CD4-positive, alpha-beta T cell (primary cell): ENCODE measurements at regions of chr19 and their contacts with region 1.

Region 1: GRCh38 chr19:17470068-17470841 is at the start of gene SLC27A1:
- DNase-seq: peak; percentile 73 to 95 (median 84)
- ATAC-seq: peak; percentile 62
- H3K4me3 ChIP-seq: peak within 1 kb of the TSS; percentile 88
- H3K4me3 Mint-ChIP-seq: peak within 1 kb of the TSS; percentile 87
- H3K27ac ChIP-seq: peak within 1 kb of the TSS; percentile 57 to 75
- H3K27ac Mint-ChIP-seq: peak within 1 kb of the TSS; percentile 34
- H3K4me1 ChIP-seq: peaks cover 36% of the 10 kb centered on the region
- H3K4me1 Mint-ChIP-seq: peaks cover 24% of the 10 kb centered on the region
- H3K27me3 ChIP-seq: no peaks in the 10 kb centered on the region
- H3K27me3 Mint-ChIP-seq: peaks cover 3% of the 10 kb centered on the region
- CTCF ChIP-seq: no peak
- total RNA-seq, gene SLC27A1: 3.0 TPM

Region 2: DNA sequence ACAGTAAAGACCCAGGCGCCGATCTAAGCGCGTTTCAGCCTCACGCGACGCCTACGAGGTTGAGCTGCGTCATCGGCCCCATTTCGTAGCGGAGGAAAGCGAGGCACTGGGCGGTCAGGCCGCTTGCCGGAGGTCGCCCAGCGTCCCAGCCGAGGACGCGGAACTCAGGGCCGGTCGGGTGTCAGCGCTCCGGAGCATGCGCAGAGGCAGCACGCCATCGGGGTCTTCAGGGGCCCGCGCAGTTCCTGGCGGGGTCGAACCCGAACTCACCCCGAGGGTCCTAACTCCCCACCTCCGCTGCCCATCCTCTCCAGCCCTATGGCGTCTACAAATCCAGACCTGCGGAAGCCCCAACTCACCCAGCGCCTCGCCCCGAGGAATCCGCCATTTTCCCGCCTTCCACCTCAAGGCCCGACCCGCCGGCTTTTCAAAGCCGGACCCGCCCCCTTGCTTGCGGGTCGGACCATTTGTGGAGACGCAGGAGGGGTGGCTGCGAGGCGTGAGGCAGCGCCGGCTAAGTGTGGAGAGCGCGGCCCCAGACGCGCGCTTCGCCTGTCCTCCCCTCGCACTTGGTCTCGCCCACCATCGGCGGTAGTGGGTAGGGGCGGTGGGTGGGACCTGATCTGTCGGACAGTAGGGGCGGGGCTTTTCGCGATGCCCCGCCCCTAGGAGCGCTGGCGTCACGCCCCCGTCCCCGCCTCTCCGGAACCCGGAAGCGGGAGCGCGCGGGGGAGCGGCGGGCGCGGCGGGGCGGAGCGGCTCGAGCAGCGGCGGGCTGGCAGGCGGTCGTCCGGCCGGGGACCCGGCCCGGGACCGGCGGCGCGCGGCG is 395.0 kb before region 1 on chr19 and contains the starts of genes HAUS8 and MYO9B:
- CTCF ChIA-PET with region 1: no interaction called
- POLR2A ChIA-PET with region 1: no interaction called
- intact Hi-C with region 1: loop called in 1 of 2 experiments (anchors 2 kb)
- DNase-seq: peak; percentile 98 to 100 (median 99)
- ATAC-seq: peak; percentile 92
- H3K4me3 ChIP-seq: peak within 1 kb of the TSS; percentile 92
- H3K4me3 Mint-ChIP-seq: peak within 1 kb of the TSS; percentile 100
- H3K27ac ChIP-seq: peak within 1 kb of the TSS; percentile 80
- H3K27ac Mint-ChIP-seq: peak within 1 kb of the TSS; percentile 92
- H3K4me1 ChIP-seq: peaks cover 59% of the 10 kb centered on the region
- H3K4me1 Mint-ChIP-seq: peaks cover 68% of the 10 kb centered on the region
- H3K27me3 ChIP-seq: no peaks in the 10 kb centered on the region
- H3K27me3 Mint-ChIP-seq: no peaks in the 10 kb centered on the region
- CTCF ChIP-seq: no peak
- total RNA-seq, gene HAUS8: 20.6 to 20.7 TPM
- total RNA-seq, gene MYO9B: 176 to 184 TPM

Region 3: GRCh38 chr19:17266975-17267788 is 203.1 kb before region 1 on chr19 and contains the start of gene BABAM1:
- CTCF ChIA-PET with region 1: no interaction called
- POLR2A ChIA-PET with region 1: no interaction called
- intact Hi-C with region 1: loop called (anchors 5 kb)
- DNase-seq: peak; percentile 85 to 99 (median 92)
- ATAC-seq: peak; percentile 94
- H3K4me3 ChIP-seq: peak within 1 kb of the TSS; percentile 84
- H3K4me3 Mint-ChIP-seq: peak within 1 kb of the TSS; percentile 83
- H3K27ac ChIP-seq: peak within 1 kb of the TSS; percentile 47 to 63
- H3K27ac Mint-ChIP-seq: peak within 1 kb of the TSS; percentile 69
- H3K4me1 ChIP-seq: peaks cover 39% of the 10 kb centered on the region
- H3K4me1 Mint-ChIP-seq: peaks cover 15% of the 10 kb centered on the region
- H3K27me3 ChIP-seq: no peaks in the 10 kb centered on the region
- H3K27me3 Mint-ChIP-seq: no peaks in the 10 kb centered on the region
- CTCF ChIP-seq: no peak
- total RNA-seq, gene BABAM1: 56.2 to 63.5 TPM

Region 4: DNA sequence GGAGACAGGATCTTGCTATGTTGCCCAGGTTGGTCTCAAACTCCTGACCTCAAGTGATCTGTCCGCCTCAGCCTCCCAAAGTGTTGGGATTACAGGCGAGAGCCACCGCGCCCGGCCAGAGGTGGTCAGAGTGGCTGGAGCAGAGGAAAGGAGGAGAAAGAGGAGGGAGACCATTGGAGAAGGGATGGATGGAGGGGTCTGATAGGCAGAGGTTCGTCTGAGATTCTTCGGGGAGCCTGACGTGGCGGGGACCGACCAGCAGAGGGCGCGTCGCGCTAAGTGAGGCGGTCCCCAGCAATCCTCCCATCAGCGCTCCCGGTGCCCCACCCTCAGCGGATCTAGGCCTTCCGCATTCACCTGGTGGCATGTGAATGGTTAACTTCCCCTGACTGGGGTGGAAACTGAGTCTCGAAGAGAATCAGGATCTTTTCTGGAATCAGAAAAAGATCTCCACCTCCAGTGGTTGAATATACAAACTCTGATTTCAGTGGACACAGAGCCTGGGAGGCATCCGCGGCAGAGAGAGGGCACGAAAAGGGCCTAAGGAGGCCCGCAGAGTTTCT is 124.1 kb before region 1 on chr19:
- CTCF ChIA-PET with region 1: no interaction called
- POLR2A ChIA-PET with region 1: no interaction called
- intact Hi-C with region 1: loop called (anchors 1 kb)
- DNase-seq: peak; percentile 52 to 87 (median 72)
- ATAC-seq: peak; percentile 98
- H3K4me3 ChIP-seq: no peak overlapping the region
- H3K4me3 Mint-ChIP-seq: peak overlapping the region; percentile 34
- H3K27ac ChIP-seq: no peak overlapping the region
- H3K27ac Mint-ChIP-seq: no peak overlapping the region
- H3K4me1 ChIP-seq: peaks cover 10% of the 10 kb centered on the region
- H3K4me1 Mint-ChIP-seq: peaks cover 5% of the 10 kb centered on the region
- H3K27me3 ChIP-seq: peaks cover 2 to 18% of the 10 kb centered on the region in 2 experiments
- H3K27me3 Mint-ChIP-seq: peaks cover 37% of the 10 kb centered on the region
- CTCF ChIP-seq: peak; percentile 97

Region 5: DNA sequence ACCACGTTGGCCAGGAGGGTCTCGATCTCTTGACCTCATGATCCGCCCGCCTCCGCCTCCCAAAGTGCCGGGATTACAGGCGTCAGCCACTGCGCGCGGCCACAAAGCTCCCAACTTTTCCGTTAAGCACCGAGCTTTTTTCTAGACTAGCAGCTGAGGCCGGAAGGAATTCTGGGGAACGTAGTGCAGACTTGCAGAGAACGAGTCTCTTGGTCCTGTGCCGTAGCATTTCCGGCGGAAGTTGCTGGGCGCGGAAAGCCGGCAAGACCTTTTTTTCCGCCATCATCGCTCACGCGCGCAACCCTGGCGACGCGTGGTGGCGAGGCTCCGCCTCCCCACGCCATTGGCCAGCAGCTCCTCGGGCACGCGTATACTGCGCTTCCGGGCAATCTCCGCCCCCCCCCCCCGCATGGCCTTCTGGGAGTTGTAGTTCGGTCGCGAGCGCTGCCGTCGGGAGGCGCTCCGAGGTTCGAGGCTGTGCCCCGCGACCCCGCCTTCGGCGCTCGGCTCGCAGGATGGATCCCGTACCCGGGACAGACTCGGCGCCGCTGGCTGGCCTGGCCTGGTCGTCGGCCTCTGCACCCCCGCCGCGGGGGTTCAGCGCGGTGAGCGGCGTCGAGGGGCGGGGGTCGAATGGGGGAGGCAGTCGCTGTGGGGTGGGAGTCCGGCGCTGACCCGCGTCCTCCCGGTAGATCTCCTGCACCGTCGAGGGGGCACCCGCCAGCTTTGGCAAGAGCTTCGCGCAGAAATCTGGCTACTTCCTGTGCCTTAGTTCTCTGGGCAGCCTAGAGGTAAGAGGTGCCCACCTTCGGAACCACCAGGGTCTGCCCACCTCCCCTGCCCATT is 50.4 kb before region 1 on chr19 and contains the start of gene MVB12A:
- CTCF ChIA-PET with region 1: interaction called, 4 read pairs
- POLR2A ChIA-PET with region 1: interaction called, 6 read pairs
- intact Hi-C with region 1: loop called in 1 of 2 experiments (anchors 2 kb)
- DNase-seq: peak; percentile 88 to 100 (median 95)
- ATAC-seq: peak; percentile 97
- H3K4me3 ChIP-seq: peak within 1 kb of the TSS; percentile 84
- H3K4me3 Mint-ChIP-seq: peak within 1 kb of the TSS; percentile 94
- H3K27ac ChIP-seq: peak within 1 kb of the TSS in 1 of 2 donors; percentile 32
- H3K27ac Mint-ChIP-seq: peak within 1 kb of the TSS; percentile 80
- H3K4me1 ChIP-seq: peaks cover 23% of the 10 kb centered on the region
- H3K4me1 Mint-ChIP-seq: peaks cover 19% of the 10 kb centered on the region
- H3K27me3 ChIP-seq: no peaks in the 10 kb centered on the region
- H3K27me3 Mint-ChIP-seq: no peaks in the 10 kb centered on the region
- CTCF ChIP-seq: no peak
- total RNA-seq, gene MVB12A: 9.8 to 10.7 TPM

Region 6: GRCh38 chr19:17435218-17435617 is 35.0 kb before region 1 on chr19:
- CTCF ChIA-PET with region 1: no interaction called
- POLR2A ChIA-PET with region 1: no interaction called
- intact Hi-C with region 1: no loop called
- DNase-seq: no peak
- ATAC-seq: no peak
- H3K4me3 ChIP-seq: no peak overlapping the region
- H3K4me3 Mint-ChIP-seq: no peak overlapping the region
- H3K27ac ChIP-seq: no peak overlapping the region
- H3K27ac Mint-ChIP-seq: no peak overlapping the region
- H3K4me1 ChIP-seq: no peaks in the 10 kb centered on the region
- H3K4me1 Mint-ChIP-seq: no peaks in the 10 kb centered on the region
- H3K27me3 ChIP-seq: no peaks in the 10 kb centered on the region
- H3K27me3 Mint-ChIP-seq: no peaks in the 10 kb centered on the region
- CTCF ChIP-seq: no peak

Region 7: GRCh38 chr19:17511724-17512573 is 41.7 kb after region 1 on chr19:
- CTCF ChIA-PET with region 1: interaction called, 5 read pairs
- POLR2A ChIA-PET with region 1: interaction called, 14 read pairs
- intact Hi-C with region 1: loop called (anchors 1 kb)
- DNase-seq: peak; percentile 73 to 92 (median 82)
- ATAC-seq: peak; percentile 75
- H3K4me3 ChIP-seq: peak overlapping the region; percentile 82
- H3K4me3 Mint-ChIP-seq: peak overlapping the region; percentile 93
- H3K27ac ChIP-seq: peak overlapping the region; percentile 64 to 94
- H3K27ac Mint-ChIP-seq: peak overlapping the region; percentile 80
- H3K4me1 ChIP-seq: peaks cover 19% of the 10 kb centered on the region
- H3K4me1 Mint-ChIP-seq: peaks cover 33% of the 10 kb centered on the region
- H3K27me3 ChIP-seq: no peaks in the 10 kb centered on the region
- H3K27me3 Mint-ChIP-seq: no peaks in the 10 kb centered on the region
- CTCF ChIP-seq: no peak

Region 8: GRCh38 chr19:17538684-17539237 is 68.5 kb after region 1 on chr19:
- CTCF ChIA-PET with region 1: no interaction called
- POLR2A ChIA-PET with region 1: no interaction called
- intact Hi-C with region 1: no loop called
- DNase-seq: peak in 1 of 14 experiments; percentile 18
- ATAC-seq: no peak
- H3K4me3 ChIP-seq: peak overlapping the region; percentile 61
- H3K4me3 Mint-ChIP-seq: peak overlapping the region; percentile 60
- H3K27ac ChIP-seq: no peak overlapping the region
- H3K27ac Mint-ChIP-seq: no peak overlapping the region
- H3K4me1 ChIP-seq: peaks cover 17% of the 10 kb centered on the region
- H3K4me1 Mint-ChIP-seq: peaks cover 12% of the 10 kb centered on the region
- H3K27me3 ChIP-seq: no peaks in the 10 kb centered on the region
- H3K27me3 Mint-ChIP-seq: no peaks in the 10 kb centered on the region
- CTCF ChIP-seq: no peak